GM10248 (cell line): ENCODE measurements at regions of chr20 and their contacts with region 1.

Region 1: GRCh38 chr20:32031007-32031958 is 20.8 kb upstream of the HCK start:
- DNase-seq: peak; percentile 69
- CTCF ChIP-seq: peak; percentile 60

Region 2: DNA sequence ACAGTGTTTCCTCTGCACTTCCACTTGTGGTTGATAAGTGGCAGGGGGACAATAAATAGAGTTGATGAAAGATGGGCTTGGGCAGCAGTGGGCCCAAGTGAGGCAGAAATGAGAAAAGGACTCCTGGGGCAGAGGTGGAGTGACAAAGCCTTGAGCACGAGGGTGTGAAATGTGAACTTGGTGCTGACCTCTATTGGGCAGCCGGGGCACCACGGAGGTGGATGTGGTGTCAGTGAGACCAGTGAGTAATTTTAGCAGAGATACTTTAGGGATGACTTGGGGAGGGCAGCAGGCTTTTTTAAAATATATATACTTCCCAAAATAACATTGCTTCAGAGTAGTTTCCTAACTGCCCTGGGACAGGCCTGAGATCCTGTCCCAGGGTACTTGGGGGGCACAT is 242.7 kb before region 1 on chr20:
- CTCF ChIA-PET with region 1: no interaction called
- POLR2A ChIA-PET with region 1: no interaction called
- DNase-seq: no peak
- CTCF ChIP-seq: no peak

Region 3: DNA sequence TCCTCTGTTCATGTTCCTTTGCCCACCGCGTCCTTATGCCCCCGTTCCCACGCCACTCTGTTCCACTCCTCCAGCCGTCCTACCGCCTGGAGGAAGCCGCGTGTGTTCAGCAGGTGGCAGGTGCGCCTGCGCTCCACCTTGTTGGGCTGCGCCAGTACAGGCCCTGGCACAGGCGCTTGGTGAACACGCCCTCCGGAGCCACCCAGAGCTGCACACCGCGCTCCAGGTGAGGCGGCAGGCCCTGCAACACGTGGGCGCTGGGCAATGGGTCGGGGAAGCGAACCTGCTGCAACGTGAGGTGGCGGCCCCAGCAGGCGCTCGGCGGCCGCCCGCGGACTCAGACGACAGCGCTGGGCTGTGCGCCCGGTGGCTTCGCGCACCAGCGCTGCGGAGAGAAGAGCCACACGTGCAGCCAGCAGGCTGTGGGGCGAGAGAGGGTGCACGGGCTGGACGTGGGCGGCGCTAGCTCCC is 181.8 kb before region 1 on chr20:
- CTCF ChIA-PET with region 1: interaction called, 89 read pairs
- POLR2A ChIA-PET with region 1: no interaction called
- DNase-seq: no peak
- CTCF ChIP-seq: no peak

Region 4: DNA sequence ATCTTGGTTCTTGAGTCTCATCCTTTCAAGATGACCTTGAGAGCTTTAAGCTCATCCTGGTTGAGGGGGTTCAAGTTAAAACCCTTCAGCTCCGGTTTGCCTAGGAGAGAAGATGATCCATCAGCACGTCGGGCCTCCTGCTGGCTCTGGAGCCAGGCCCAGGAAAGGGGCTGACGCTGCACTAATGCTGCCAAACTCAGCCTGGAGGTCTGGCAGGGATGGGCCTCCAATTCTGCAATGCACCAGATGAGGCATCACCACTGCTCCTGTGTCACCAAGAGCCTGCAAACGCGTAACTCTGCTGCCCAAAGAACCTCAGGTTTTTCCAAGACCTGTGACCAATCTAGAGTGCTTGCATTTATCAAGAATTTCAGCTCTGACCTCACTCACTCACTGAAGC is 85.5 kb before region 1 on chr20:
- CTCF ChIA-PET with region 1: no interaction called
- POLR2A ChIA-PET with region 1: no interaction called
- DNase-seq: no peak
- CTCF ChIP-seq: no peak

Region 5: DNA sequence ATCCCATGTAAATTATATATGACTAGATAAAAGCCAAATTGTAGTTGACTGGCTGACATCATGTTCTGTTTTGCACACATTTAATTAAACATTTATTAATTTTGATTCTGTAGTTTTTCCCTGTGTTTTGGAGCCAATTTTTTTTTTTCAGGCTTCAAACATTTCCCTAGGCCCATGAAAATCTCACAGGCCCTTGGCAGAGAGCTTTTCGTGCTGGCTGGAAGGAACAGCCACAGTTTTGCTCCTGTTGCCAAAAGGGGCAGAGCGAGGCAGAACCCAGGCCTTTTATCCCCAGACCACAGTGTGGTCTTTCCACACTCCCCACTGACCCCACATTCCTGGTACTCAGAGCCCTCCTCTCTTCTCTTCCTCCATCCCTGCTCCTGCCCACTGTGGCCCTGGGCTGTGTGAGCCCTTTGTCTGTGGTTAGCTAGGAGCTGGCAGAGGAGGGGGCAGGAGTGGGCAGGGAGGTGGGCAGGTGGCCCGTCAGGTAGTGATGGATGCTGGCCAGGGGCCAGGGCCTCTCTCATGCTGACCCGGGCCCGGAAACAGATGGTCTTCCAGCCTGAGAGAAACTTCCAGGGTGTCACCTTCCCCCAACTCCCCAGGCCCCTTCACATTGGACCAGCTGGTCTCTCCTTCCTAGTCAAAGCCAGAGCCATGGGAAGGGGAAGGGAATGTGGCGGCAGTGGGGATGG is 40.5 kb before region 1 on chr20:
- CTCF ChIA-PET with region 1: interaction called, 10 read pairs
- POLR2A ChIA-PET with region 1: no interaction called
- DNase-seq: no peak
- CTCF ChIP-seq: no peak

Region 6: GRCh38 chr20:32052090-32052777 is 21.0 kb after region 1 on chr20 and contains the start of gene HCK:
- CTCF ChIA-PET with region 1: interaction called, 16 read pairs
- POLR2A ChIA-PET with region 1: no interaction called
- DNase-seq: peak; percentile 75
- CTCF ChIP-seq: no peak

Region 7: GRCh38 chr20:32079655-32080109 is 48.4 kb after region 1 on chr20:
- CTCF ChIA-PET with region 1: interaction called, 20 read pairs
- POLR2A ChIA-PET with region 1: no interaction called
- DNase-seq: no peak
- CTCF ChIP-seq: no peak

Region 8: DNA sequence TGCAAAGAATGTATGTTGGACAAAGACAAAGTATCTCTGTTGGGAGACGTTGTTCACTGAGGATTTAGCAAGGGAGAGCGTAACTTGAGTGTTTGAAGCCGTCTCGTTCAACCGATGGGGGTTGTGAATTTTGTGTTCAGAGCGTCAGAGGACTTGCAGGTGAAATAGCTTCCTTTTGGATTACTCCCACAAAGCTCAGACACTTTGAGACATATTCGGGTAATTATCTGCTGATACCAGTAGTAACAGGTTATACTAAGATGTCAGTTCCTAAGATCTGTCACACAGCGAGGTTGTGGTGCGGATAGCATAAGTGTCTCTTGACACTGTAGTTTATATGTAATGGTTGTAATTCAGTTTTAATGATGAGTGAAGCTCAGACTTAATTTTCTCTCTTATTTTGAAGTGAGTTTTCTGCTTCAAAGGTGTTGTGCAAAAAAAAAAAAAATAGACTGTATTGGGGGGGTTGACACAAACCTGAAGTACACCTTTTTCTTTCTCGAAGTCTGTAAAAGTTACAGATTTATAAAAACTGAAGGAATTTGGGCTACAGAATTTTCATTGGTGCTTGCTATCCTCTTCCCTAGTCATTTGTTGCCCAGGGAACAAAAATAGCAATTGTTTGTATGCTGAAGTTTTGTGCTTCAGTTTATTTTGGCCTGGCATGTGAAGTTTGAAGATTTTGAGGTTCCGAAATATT is 328.5 kb after region 1 on chr20:
- CTCF ChIA-PET with region 1: no interaction called
- POLR2A ChIA-PET with region 1: no interaction called
- DNase-seq: no peak
- CTCF ChIP-seq: no peak